ENCODE measurements at regions of chr15 and their contacts with region 1.

Region 1: GRCh38 chr15:75857886-75858285 is 14.6 kb downstream of the UBE2Q2 start:
- DNase-seq: no peak
- ATAC-seq: no peak
- H3K4me3 Mint-ChIP-seq: no peak overlapping the region
- H3K27ac Mint-ChIP-seq: peak overlapping the region; percentile 61
- H3K4me1 Mint-ChIP-seq: peaks cover 20% of the 10 kb centered on the region
- H3K27me3 Mint-ChIP-seq: no peaks in the 10 kb centered on the region

Region 2: GRCh38 chr15:74964794-74965193 is 893.1 kb before region 1 on chr15:
- CTCF ChIA-PET with region 1: no interaction called
- POLR2A ChIA-PET with region 1: interaction called, 10 read pairs
- intact Hi-C with region 1: no loop called
- DNase-seq: no peak
- ATAC-seq: no peak
- H3K4me3 Mint-ChIP-seq: no peak overlapping the region
- H3K27ac Mint-ChIP-seq: no peak overlapping the region
- H3K4me1 Mint-ChIP-seq: peaks cover 16% of the 10 kb centered on the region
- H3K27me3 Mint-ChIP-seq: peaks cover 2% of the 10 kb centered on the region

Region 3: DNA sequence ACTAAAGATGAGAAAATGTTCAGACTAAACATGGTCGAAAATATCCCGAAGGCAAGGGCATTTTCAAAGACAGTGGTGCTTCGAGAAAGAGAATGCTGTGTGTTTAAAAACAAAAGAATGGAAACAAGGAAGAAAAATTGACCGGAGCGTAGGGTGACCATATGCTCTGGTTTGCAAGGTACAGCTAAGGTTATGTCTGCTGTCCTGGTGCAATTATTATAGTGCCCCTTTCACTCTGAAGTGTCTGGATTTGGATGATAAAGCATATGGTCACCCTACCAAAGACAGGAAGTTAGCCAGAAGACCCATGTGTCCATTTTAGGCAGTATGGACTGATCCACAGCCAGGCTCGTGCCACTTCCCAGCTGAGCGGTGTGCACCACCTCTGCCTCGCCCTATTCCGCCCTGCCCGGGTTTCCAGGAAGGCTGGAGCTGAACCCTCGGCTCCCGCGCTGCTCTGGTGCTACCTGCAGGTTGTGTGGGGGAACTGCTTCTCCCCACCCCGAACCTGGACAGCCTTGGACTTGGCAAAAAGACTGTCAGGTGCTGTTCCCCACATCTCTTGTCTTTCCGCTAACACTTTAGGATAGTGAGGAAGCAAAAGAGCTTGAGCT is 550.0 kb before region 1 on chr15:
- CTCF ChIA-PET with region 1: no interaction called
- POLR2A ChIA-PET with region 1: no interaction called
- intact Hi-C with region 1: no loop called
- DNase-seq: peak; percentile 50
- ATAC-seq: peak; percentile 33
- H3K4me3 Mint-ChIP-seq: no peak overlapping the region
- H3K27ac Mint-ChIP-seq: no peak overlapping the region
- H3K4me1 Mint-ChIP-seq: peaks cover 3% of the 10 kb centered on the region
- H3K27me3 Mint-ChIP-seq: peaks cover 23% of the 10 kb centered on the region

Region 4: GRCh38 chr15:75639709-75640482 is 218.0 kb before region 1 on chr15 and contains the start of gene IMP3:
- CTCF ChIA-PET with region 1: no interaction called
- POLR2A ChIA-PET with region 1: no interaction called
- intact Hi-C with region 1: no loop called
- DNase-seq: peak; percentile 96
- ATAC-seq: peak; percentile 92
- H3K4me3 Mint-ChIP-seq: peak within 1 kb of the TSS; percentile 99
- H3K27ac Mint-ChIP-seq: peak within 1 kb of the TSS; percentile 96
- H3K4me1 Mint-ChIP-seq: peaks cover 25% of the 10 kb centered on the region
- H3K27me3 Mint-ChIP-seq: no peaks in the 10 kb centered on the region
- total RNA-seq, gene IMP3: 80.3 to 87.5 TPM

Region 5: DNA sequence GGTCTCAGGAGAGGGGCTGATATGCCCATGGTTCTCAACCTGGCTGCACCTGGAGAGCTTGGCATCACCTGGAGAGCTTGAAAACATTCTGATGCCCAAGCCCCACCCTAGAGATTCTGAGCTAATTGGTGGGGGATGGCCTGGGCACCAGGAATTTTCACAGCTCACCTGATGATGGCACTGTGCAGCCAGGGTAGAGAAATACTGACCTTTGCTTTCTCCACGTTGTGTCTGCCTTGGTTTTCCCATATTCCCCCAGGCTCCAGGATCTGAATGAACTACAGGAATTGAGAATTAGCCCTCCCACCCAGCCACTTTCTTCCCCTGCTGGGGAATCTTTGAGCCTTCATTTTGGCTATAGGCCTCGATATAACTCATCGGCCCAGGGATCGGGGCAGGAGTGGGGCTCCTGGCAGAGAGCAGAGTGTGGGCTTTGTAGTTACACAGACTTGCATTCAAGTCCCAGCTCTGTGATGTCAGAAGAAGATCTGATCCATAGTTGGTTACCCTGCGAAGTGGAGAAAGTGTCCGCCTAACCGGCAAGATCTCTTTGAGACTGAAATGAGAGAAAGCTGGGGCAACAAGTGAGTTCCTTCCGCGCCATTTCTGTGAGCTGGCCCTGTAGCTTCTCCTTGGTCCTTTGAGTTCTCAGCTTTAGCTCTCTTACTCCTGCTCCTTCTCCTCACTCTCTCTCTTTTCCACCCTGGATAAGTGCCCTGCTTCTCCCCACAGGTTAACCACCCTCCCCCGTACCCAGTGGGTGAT is 47.7 kb before region 1 on chr15:
- CTCF ChIA-PET with region 1: no interaction called
- POLR2A ChIA-PET with region 1: no interaction called
- intact Hi-C with region 1: no loop called
- DNase-seq: peak; percentile 33
- ATAC-seq: no peak
- H3K4me3 Mint-ChIP-seq: no peak overlapping the region
- H3K27ac Mint-ChIP-seq: no peak overlapping the region
- H3K4me1 Mint-ChIP-seq: no peaks in the 10 kb centered on the region
- H3K27me3 Mint-ChIP-seq: no peaks in the 10 kb centered on the region

Region 6: GRCh38 chr15:76939715-76940114 is 1081.8 kb after region 1 on chr15:
- CTCF ChIA-PET with region 1: no interaction called
- POLR2A ChIA-PET with region 1: no interaction called
- intact Hi-C with region 1: no loop called
- DNase-seq: no peak
- ATAC-seq: no peak
- H3K4me3 Mint-ChIP-seq: no peak overlapping the region
- H3K27ac Mint-ChIP-seq: no peak overlapping the region
- H3K4me1 Mint-ChIP-seq: peaks cover 16% of the 10 kb centered on the region
- H3K27me3 Mint-ChIP-seq: no peaks in the 10 kb centered on the region

Measured in activated CD4-positive, alpha-beta T cell treated with anti-CD3 and anti-CD28 coated beads for 36 hours (primary cell).